ENCODE measurements at regions of chr16 and their contacts with region 1.

Region 1: GRCh38 chr16:81204798-81205680 is 33.5 kb upstream of the BCO1 start:
- DNase-seq: peak in 4 of 5 donors; percentile 10 to 35 (median 28)
- H3K4me3 ChIP-seq: no peak overlapping the region
- H3K4me3 Mint-ChIP-seq: no peak overlapping the region
- H3K27ac ChIP-seq: no peak overlapping the region
- H3K27ac Mint-ChIP-seq: no peak overlapping the region
- H3K4me1 ChIP-seq: no peaks in the 10 kb centered on the region
- H3K4me1 Mint-ChIP-seq: peaks cover 0 to 3% (median under 1%) of the 10 kb centered on the region in 4 donors
- H3K27me3 ChIP-seq: no peaks in the 10 kb centered on the region
- H3K27me3 Mint-ChIP-seq: peaks cover 6 to 18% of the 10 kb centered on the region in 2 donors

Region 2: GRCh38 chr16:80544336-80544735 is 660.7 kb before region 1 on chr16:
- CTCF ChIA-PET with region 1: no interaction called
- POLR2A ChIA-PET with region 1: no interaction called
- intact Hi-C with region 1: no loop called
- DNase-seq: no peak
- H3K4me3 ChIP-seq: no peak overlapping the region
- H3K4me3 Mint-ChIP-seq: no peak overlapping the region
- H3K27ac ChIP-seq: no peak overlapping the region
- H3K27ac Mint-ChIP-seq: no peak overlapping the region
- H3K4me1 ChIP-seq: peaks cover 12% of the 10 kb centered on the region
- H3K4me1 Mint-ChIP-seq: peaks cover 8 to 21% (median 14%) of the 10 kb centered on the region in 4 donors
- H3K27me3 ChIP-seq: no peaks in the 10 kb centered on the region
- H3K27me3 Mint-ChIP-seq: peaks cover 1 to 5% of the 10 kb centered on the region in 2 donors

Region 3: DNA sequence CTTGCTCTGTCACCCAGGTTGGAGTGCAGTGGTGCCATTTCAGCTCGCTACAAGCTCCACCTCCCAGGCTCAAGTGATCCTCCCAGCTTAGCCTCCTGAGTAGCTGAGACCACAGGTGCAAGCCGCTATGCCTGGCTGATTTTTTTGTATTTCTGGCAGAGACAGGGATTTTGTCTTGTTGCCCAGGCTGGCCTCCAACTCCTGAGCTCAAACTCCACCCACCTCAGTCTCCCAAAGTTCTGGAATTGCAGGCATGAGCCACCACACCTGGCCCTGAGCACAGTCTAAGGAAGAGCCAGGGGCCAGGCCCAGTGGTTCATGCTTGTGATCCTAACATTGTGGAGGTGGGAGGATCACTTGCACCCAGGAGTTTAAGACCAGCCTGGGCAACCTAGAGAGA is 11.7 kb after region 1 on chr16:
- CTCF ChIA-PET with region 1: interaction called, 10 read pairs
- POLR2A ChIA-PET with region 1: no interaction called
- intact Hi-C with region 1: no loop called
- DNase-seq: no peak
- H3K4me3 ChIP-seq: no peak overlapping the region
- H3K4me3 Mint-ChIP-seq: no peak overlapping the region
- H3K27ac ChIP-seq: no peak overlapping the region
- H3K27ac Mint-ChIP-seq: no peak overlapping the region
- H3K4me1 ChIP-seq: no peaks in the 10 kb centered on the region
- H3K4me1 Mint-ChIP-seq: peaks cover 0 to 2% (median 0%) of the 10 kb centered on the region in 4 donors
- H3K27me3 ChIP-seq: no peaks in the 10 kb centered on the region
- H3K27me3 Mint-ChIP-seq: peaks cover 3 to 4% of the 10 kb centered on the region in 2 donors

Region 4: DNA sequence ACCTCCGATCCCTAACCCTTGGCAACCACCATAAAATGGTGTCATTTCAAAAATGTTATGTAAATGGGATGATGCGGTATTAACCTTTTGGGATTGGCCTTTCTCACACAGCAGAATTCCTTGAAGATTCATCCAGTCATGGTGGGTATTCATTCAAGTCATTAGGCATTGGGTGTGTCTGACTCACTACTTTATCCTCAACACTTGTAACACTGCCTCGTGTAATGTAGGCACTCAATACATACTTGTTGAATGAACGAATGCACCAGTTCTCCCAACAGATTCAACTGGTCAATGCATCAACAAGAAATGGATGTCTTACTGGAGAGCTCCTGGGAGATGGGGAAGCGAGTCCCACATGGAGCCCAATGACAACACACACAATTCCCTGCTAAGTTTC is 87.9 kb after region 1 on chr16:
- CTCF ChIA-PET with region 1: no interaction called
- POLR2A ChIA-PET with region 1: no interaction called
- intact Hi-C with region 1: no loop called
- DNase-seq: no peak
- H3K4me3 ChIP-seq: no peak overlapping the region
- H3K4me3 Mint-ChIP-seq: no peak overlapping the region
- H3K27ac ChIP-seq: no peak overlapping the region
- H3K27ac Mint-ChIP-seq: peak overlapping the region in 1 of 7 donors; percentile 7
- H3K4me1 ChIP-seq: no peaks in the 10 kb centered on the region
- H3K4me1 Mint-ChIP-seq: no peaks in the 10 kb centered on the region
- H3K27me3 ChIP-seq: no peaks in the 10 kb centered on the region
- H3K27me3 Mint-ChIP-seq: peaks cover 15 to 19% of the 10 kb centered on the region in 2 donors

Region 5: GRCh38 chr16:81737885-81738786 is 533.1 kb after region 1 on chr16:
- CTCF ChIA-PET with region 1: interaction called, 24 read pairs
- POLR2A ChIA-PET with region 1: interaction called, 3 read pairs
- intact Hi-C with region 1: no loop called
- DNase-seq: peak; percentile 80 to 84 (median 81)
- H3K4me3 ChIP-seq: peak overlapping the region in 1 of 2 donors; percentile 3
- H3K4me3 Mint-ChIP-seq: peak overlapping the region; percentile 67 to 82 (median 75)
- H3K27ac ChIP-seq: no peak overlapping the region
- H3K27ac Mint-ChIP-seq: peak overlapping the region in 5 of 7 donors; percentile 22 to 78 (median 30)
- H3K4me1 ChIP-seq: peaks cover 4% of the 10 kb centered on the region
- H3K4me1 Mint-ChIP-seq: peaks cover 0 to 12% (median 7%) of the 10 kb centered on the region in 4 donors
- H3K27me3 ChIP-seq: no peaks in the 10 kb centered on the region
- H3K27me3 Mint-ChIP-seq: no peaks in the 10 kb centered on the region

Measured in CD4-positive, alpha-beta memory T cell (primary cell).